IMR-90 (cell line): ENCODE measurements at regions of chr14 and their contacts with region 1.

Region 1: DNA sequence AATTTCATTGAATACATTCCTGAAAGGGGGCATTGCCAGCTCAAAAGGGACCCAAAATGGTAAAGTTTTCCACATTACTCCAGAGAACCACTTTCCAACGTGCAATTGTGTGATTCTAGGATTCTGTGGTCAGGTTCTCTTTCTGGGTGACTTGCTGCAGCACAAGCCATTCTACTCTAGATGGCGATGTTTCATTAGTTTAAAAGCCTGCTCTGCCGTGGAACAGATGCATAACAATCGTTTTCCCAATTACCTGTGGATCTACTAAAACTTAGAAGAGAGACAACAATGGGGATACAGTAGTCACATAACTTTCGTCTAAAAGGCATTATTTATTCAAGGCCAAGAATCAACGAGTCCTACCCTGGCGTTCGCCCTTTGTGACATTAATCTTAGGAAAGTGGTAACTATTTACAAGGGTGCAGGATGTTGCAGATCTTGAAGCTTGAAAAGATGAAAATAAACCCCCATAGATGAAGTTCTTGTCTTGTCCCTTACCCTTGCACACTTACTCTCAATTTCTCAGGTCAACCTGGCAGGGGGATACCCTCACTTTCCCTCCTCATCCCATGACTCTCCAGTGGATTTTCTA is 400.9 kb downstream of the SNAPC1 start:
- DNase-seq: peak; percentile 56
- ATAC-seq: peak; percentile 84
- H3K4me3 ChIP-seq: no peak overlapping the region
- H3K27ac ChIP-seq: no peak overlapping the region
- H3K4me1 ChIP-seq: no peaks in the 10 kb centered on the region
- H3K27me3 ChIP-seq: peaks cover 15% of the 10 kb centered on the region
- CTCF ChIP-seq: peak; percentile 82
- POLR2A ChIP-seq: no peak
- RAD21 ChIP-seq: peak; percentile 87

Region 2: DNA sequence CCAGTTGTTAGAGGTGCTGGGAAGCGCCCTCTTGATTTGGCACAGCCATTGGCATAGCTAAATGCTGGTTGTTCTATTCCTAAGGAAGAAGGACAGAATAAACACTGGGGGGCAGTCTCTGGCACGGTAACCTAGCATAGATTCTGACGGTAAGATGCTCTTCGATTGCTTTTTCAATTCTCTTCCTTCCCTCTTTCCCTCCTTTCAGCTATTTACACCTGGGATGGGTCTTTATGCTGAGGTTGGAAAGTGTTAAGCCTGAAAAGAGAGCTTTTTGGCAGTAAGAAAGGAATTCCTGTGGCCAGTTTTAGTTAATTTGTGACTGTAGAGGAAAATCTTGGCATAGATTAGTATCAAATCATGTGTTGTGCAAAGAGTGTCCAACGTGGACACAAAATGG is 238.1 kb before region 1 on chr14:
- CTCF ChIA-PET with region 1: no interaction called
- POLR2A ChIA-PET with region 1: no interaction called
- dilution Hi-C with region 1: no loop called
- in situ Hi-C with region 1: no loop called
- intact Hi-C with region 1: loop called (anchors 1 kb)
- DNase-seq: peak; percentile 29
- ATAC-seq: no peak
- H3K4me3 ChIP-seq: no peak overlapping the region
- H3K27ac ChIP-seq: no peak overlapping the region
- H3K4me1 ChIP-seq: peaks cover 25% of the 10 kb centered on the region
- H3K27me3 ChIP-seq: no peaks in the 10 kb centered on the region
- CTCF ChIP-seq: peak; percentile 40
- POLR2A ChIP-seq: no peak
- RAD21 ChIP-seq: peak; percentile 55

Region 3: GRCh38 chr14:62381311-62382070 is 218.4 kb after region 1 on chr14:
- CTCF ChIA-PET with region 1: no interaction called
- POLR2A ChIA-PET with region 1: no interaction called
- dilution Hi-C with region 1: no loop called
- in situ Hi-C with region 1: no loop called
- intact Hi-C with region 1: no loop called
- DNase-seq: no peak
- ATAC-seq: no peak
- H3K4me3 ChIP-seq: no peak overlapping the region
- H3K27ac ChIP-seq: no peak overlapping the region
- H3K4me1 ChIP-seq: no peaks in the 10 kb centered on the region
- H3K27me3 ChIP-seq: no peaks in the 10 kb centered on the region
- CTCF ChIP-seq: no peak
- POLR2A ChIP-seq: no peak
- RAD21 ChIP-seq: no peak

Region 4: GRCh38 chr14:63174760-63175211 is 1011.7 kb after region 1 on chr14:
- CTCF ChIA-PET with region 1: no interaction called
- POLR2A ChIA-PET with region 1: no interaction called
- dilution Hi-C with region 1: no loop called
- in situ Hi-C with region 1: no loop called
- intact Hi-C with region 1: loop called (anchors 10 kb)
- DNase-seq: peak; percentile 76
- ATAC-seq: peak; percentile 87
- H3K4me3 ChIP-seq: no peak overlapping the region
- H3K27ac ChIP-seq: no peak overlapping the region
- H3K4me1 ChIP-seq: peaks cover 3% of the 10 kb centered on the region; the same call in 1 of the 2 replicates
- H3K27me3 ChIP-seq: peaks cover 2% of the 10 kb centered on the region; the same call in 1 of the 2 replicates
- CTCF ChIP-seq: peak; percentile 68
- POLR2A ChIP-seq: no peak
- RAD21 ChIP-seq: peak; percentile 74

Region 5: GRCh38 chr14:63308723-63309317 is 1145.7 kb after region 1 on chr14:
- CTCF ChIA-PET with region 1: no interaction called
- POLR2A ChIA-PET with region 1: no interaction called
- dilution Hi-C with region 1: no loop called
- in situ Hi-C with region 1: no loop called
- intact Hi-C with region 1: loop called (anchors 1 kb)
- DNase-seq: peak; percentile 29
- ATAC-seq: no peak
- H3K4me3 ChIP-seq: no peak overlapping the region
- H3K27ac ChIP-seq: no peak overlapping the region
- H3K4me1 ChIP-seq: no peaks in the 10 kb centered on the region
- H3K27me3 ChIP-seq: peaks cover 7% of the 10 kb centered on the region
- CTCF ChIP-seq: peak; percentile 51
- POLR2A ChIP-seq: no peak
- RAD21 ChIP-seq: peak; percentile 45

Region 6: GRCh38 chr14:63543000-63543825 is 1380.1 kb after region 1 on chr14 and contains the start of gene PPP2R5E:
- CTCF ChIA-PET with region 1: no interaction called
- POLR2A ChIA-PET with region 1: no interaction called
- dilution Hi-C with region 1: no loop called
- in situ Hi-C with region 1: no loop called
- intact Hi-C with region 1: loop called (anchors 10 kb)
- DNase-seq: peak; percentile 99
- ATAC-seq: peak; percentile 97
- H3K4me3 ChIP-seq: peak within 1 kb of the TSS; percentile 72
- H3K27ac ChIP-seq: peak within 1 kb of the TSS; percentile 80
- H3K4me1 ChIP-seq: no peaks in the 10 kb centered on the region
- H3K27me3 ChIP-seq: no peaks in the 10 kb centered on the region
- CTCF ChIP-seq: no peak
- POLR2A ChIP-seq: peak; percentile 84
- RAD21 ChIP-seq: 0 out of 2 replicates have a peak, but pooled peaks have one; percentile 14
- total RNA-seq, gene PPP2R5E: 12.2 and 21.1 TPM in 2 replicates

Region 7: DNA sequence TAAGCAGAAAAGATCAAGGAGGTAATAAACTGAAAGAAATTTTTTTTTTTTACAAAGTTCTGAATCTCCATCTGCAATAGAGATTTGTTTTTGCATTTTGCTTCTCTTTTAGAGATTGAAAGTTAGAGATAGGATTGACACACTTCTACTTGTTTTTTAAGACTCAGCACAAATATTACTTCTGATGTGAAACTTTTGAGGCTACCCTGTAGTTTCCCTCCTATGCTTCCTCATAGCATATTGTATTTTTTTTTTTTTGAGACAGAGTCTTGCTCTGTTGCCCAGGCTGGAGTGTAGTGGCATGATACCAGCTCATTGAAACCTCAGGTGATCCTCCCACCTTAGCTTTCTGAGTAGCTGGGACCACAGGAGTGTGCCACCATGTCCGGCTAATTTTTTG is 1596.9 kb after region 1 on chr14:
- CTCF ChIA-PET with region 1: no interaction called
- POLR2A ChIA-PET with region 1: no interaction called
- dilution Hi-C with region 1: no loop called
- in situ Hi-C with region 1: no loop called
- intact Hi-C with region 1: loop called (anchors 10 kb)
- DNase-seq: no peak
- ATAC-seq: no peak
- H3K4me3 ChIP-seq: no peak overlapping the region
- H3K27ac ChIP-seq: no peak overlapping the region
- H3K4me1 ChIP-seq: no peaks in the 10 kb centered on the region
- H3K27me3 ChIP-seq: no peaks in the 10 kb centered on the region
- CTCF ChIP-seq: no peak
- POLR2A ChIP-seq: no peak
- RAD21 ChIP-seq: no peak